ENCODE measurements at regions of chr17 and their contacts with region 1.

Region 1: GRCh38 chr17:58112970-58113631 is 29.9 kb downstream of the DYNLL2 start:
- DNase-seq: peak; percentile 63 to 78 (median 70)
- ATAC-seq: peak; percentile 89
- H3K4me3 ChIP-seq: no peak overlapping the region
- H3K27ac ChIP-seq: no peak overlapping the region
- H3K4me1 ChIP-seq: no peaks in the 10 kb centered on the region
- H3K27me3 ChIP-seq: peaks cover 12 to 25% of the 10 kb centered on the region in 2 experiments; a peak in 4 of 5 replicates
- CTCF ChIP-seq: peak; percentile 87 to 95 (median 90)
- EP300 ChIP-seq: no peak
- POLR2A ChIP-seq: no peak
- RAD21 ChIP-seq: peak; percentile 88 to 94

Region 2: DNA sequence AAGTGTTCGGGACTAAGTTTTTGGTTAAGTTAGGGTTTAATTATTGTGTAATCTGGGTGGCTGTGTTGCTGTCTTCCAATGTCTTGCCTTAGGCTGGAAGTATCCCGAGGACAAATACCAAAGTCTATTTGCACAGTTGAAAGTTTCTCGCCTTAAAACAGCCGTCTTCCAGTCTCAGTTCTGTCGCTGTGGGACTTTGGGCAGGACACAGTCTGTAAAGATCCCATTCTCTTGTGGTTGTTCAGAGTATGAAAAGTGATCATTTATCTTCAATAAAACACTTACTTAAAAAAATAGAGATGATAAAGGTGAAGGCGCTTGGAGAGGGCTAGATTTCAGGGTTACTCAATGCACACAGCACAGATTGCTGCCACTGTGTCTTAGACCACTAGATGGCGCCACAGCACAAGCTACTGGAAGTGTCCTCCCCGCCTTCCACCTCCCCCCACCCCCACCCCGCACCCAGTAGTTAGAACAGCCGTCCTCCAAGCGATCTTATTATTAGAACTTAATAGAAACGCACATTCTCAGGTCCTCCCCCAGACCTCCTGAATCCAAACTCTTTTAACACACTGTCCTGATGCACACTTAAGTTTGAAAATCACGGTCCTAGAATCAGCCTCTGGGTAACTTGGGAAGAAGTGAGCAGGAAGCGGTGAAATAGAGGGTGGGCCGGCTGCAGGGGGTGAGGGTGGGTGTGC is 982.2 kb before region 1 on chr17:
- CTCF ChIA-PET with region 1: interaction called, 4 read pairs
- POLR2A ChIA-PET with region 1: no interaction called
- in situ Hi-C with region 1: loop called (anchors 25 kb)
- intact Hi-C with region 1: loop called (anchors 10 kb)
- DNase-seq: peak; percentile 88 to 91 (median 90)
- ATAC-seq: peak; percentile 98
- H3K4me3 ChIP-seq: no peak overlapping the region
- H3K27ac ChIP-seq: no peak overlapping the region
- H3K4me1 ChIP-seq: peaks cover 0 to 4% of the 10 kb centered on the region in 2 experiments; a peak in 1 of 5 replicates
- H3K27me3 ChIP-seq: peaks cover 18 to 20% of the 10 kb centered on the region in 2 experiments
- CTCF ChIP-seq: peak; percentile 63 to 85 (median 81)
- EP300 ChIP-seq: no peak
- POLR2A ChIP-seq: no peak
- RAD21 ChIP-seq: peak; percentile 60 to 77

Region 3: GRCh38 chr17:57855391-57856035 is 257.6 kb before region 1 on chr17:
- CTCF ChIA-PET with region 1: interaction called, 3 read pairs
- POLR2A ChIA-PET with region 1: interaction called, 4 read pairs
- in situ Hi-C with region 1: loop called (anchors 5 kb)
- intact Hi-C with region 1: loop called (anchors 1 kb)
- DNase-seq: no peak
- ATAC-seq: no peak
- H3K4me3 ChIP-seq: no peak overlapping the region
- H3K27ac ChIP-seq: no peak overlapping the region
- H3K4me1 ChIP-seq: peaks cover 25 to 41% of the 10 kb centered on the region in 2 experiments
- H3K27me3 ChIP-seq: peaks cover 0 to 4% of the 10 kb centered on the region in 2 experiments; a peak in 1 of 5 replicates
- CTCF ChIP-seq: no peak
- EP300 ChIP-seq: no peak
- POLR2A ChIP-seq: no peak
- RAD21 ChIP-seq: no peak

Region 4: DNA sequence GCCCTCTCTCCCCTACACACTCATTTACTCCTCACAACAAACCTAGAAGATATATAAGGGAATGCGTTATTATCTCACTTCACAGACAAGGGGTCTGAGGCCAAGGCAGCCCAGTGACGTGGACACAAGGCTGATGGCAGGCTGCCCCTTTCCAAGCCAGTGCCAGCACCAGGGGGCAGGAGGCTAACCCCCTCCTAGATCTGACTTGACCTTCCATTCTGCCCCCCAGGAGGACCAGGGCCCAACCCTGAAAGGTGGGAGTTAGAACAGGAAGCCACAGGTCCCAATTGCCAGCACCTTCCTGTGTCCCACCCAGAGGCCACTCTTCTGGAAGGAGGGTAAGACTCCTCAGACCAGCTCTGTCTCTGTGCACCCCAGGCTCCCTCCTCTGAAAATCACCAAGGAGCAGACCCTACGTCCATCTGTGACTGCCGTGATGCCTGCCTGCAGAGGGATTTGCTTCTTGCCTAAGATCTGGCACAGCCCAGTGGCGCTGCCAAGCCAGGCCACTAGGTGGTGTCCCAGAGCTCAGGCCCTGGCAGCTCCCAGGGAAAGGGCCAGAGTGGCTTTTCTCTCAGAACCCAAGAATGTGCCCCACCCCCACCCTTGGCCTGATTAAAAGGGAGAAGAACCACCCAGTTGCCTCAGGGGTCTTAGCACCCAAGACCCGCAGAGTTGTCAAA is 220.8 kb before region 1 on chr17:
- CTCF ChIA-PET with region 1: no interaction called
- POLR2A ChIA-PET with region 1: no interaction called
- in situ Hi-C with region 1: no loop called
- intact Hi-C with region 1: loop called (anchors 10 kb)
- DNase-seq: peak; percentile 82 to 86 (median 84)
- ATAC-seq: peak; percentile 96
- H3K4me3 ChIP-seq: no peak overlapping the region
- H3K27ac ChIP-seq: no peak overlapping the region
- H3K4me1 ChIP-seq: peaks cover 0 to 8% of the 10 kb centered on the region in 2 experiments; a peak in 2 of 5 replicates
- H3K27me3 ChIP-seq: peaks cover 6 to 45% of the 10 kb centered on the region in 2 experiments
- CTCF ChIP-seq: peak; percentile 91 to 98 (median 94)
- EP300 ChIP-seq: no peak
- POLR2A ChIP-seq: no peak
- RAD21 ChIP-seq: peak; percentile 63 to 86

Measured in K562 (cell line).